ENCODE measurements at regions of chr14 and their contacts with region 1.

Region 1: DNA sequence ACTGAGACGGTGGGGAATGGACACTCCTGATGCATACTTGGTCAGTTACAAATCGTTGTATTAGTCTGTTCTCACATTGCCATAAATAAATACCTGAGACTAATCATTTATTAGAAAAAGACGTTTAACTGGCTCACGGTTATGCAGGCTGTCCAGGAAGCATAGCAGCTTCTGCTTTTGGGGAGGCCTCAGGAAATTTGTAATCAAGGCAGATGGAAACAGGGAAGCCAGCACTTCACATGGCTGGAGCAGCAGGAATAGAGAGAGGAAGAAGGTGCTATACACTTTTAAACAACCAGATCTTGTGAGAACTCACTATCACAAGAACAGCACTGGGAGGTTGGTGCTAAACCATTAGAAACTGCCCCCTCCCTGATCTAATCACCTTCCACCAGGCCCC is 418.2 kb downstream of the FLRT2 start:
- DNase-seq: peak; percentile 52 to 74 (median 61)
- H3K4me3 ChIP-seq: peak overlapping the region in 1 of 3 experiments; percentile 50
- H3K4me3 Mint-ChIP-seq: peak overlapping the region in 1 of 2 donors; percentile 69
- H3K27ac ChIP-seq: peak overlapping the region in 1 of 2 donors; percentile 50
- H3K27ac Mint-ChIP-seq: peak overlapping the region; percentile 47 to 88 (median 70)
- H3K4me1 ChIP-seq: peaks cover 23 to 31% of the 10 kb centered on the region in 2 donors
- H3K4me1 Mint-ChIP-seq: peaks cover 34% of the 10 kb centered on the region
- H3K27me3 ChIP-seq: no peaks in the 10 kb centered on the region
- H3K27me3 Mint-ChIP-seq: no peaks in the 10 kb centered on the region
- CTCF ChIP-seq: no peak

Region 2: DNA sequence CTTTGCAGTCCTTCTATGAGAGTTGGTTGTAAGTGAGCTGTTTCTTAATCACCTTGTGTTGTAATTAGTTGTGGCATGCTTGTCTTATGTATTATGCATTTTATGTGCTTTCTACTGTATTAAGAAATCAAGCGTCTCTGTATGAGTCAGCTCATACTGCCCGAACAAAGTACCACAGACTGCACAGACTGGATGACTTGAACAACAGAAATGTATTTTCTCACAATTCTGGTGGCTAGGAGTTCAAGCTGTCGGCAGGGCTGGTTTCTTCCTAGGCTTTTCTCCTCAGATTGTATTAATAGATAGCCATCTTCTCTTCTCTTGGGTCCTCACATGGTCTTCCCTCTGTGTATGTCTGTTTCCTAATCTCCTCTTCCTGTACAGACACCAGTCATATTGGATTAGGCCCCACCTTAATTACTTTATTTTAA is 340.5 kb before region 1 on chr14:
- intact Hi-C with region 1: loop called in 1 of 2 experiments (anchors 10 kb)
- DNase-seq: peak; percentile 76 to 91 (median 89)
- H3K4me3 ChIP-seq: peak overlapping the region in 1 of 3 experiments; percentile 28
- H3K4me3 Mint-ChIP-seq: peak overlapping the region in 1 of 2 donors; percentile 51
- H3K27ac ChIP-seq: peak overlapping the region; percentile 55 to 90
- H3K27ac Mint-ChIP-seq: peak overlapping the region; percentile 92 to 97 (median 95)
- H3K4me1 ChIP-seq: peaks cover 24 to 38% of the 10 kb centered on the region in 2 donors
- H3K4me1 Mint-ChIP-seq: peaks cover 31% of the 10 kb centered on the region
- H3K27me3 ChIP-seq: no peaks in the 10 kb centered on the region
- H3K27me3 Mint-ChIP-seq: peaks cover 0 to 2% (median 0%) of the 10 kb centered on the region in 3 donors
- CTCF ChIP-seq: no peak

Region 3: GRCh38 chr14:85991156-85991555 is 43.0 kb after region 1 on chr14:
- intact Hi-C with region 1: no loop called
- DNase-seq: peak in 1 of 3 donors; percentile 11
- H3K4me3 ChIP-seq: no peak overlapping the region
- H3K4me3 Mint-ChIP-seq: no peak overlapping the region
- H3K27ac ChIP-seq: no peak overlapping the region
- H3K27ac Mint-ChIP-seq: no peak overlapping the region
- H3K4me1 ChIP-seq: no peaks in the 10 kb centered on the region
- H3K4me1 Mint-ChIP-seq: no peaks in the 10 kb centered on the region
- H3K27me3 ChIP-seq: no peaks in the 10 kb centered on the region
- H3K27me3 Mint-ChIP-seq: no peaks in the 10 kb centered on the region
- CTCF ChIP-seq: no peak

Region 4: GRCh38 chr14:86124328-86124727 is 176.2 kb after region 1 on chr14:
- intact Hi-C with region 1: no loop called
- DNase-seq: no peak
- H3K4me3 ChIP-seq: no peak overlapping the region
- H3K4me3 Mint-ChIP-seq: no peak overlapping the region
- H3K27ac ChIP-seq: no peak overlapping the region
- H3K27ac Mint-ChIP-seq: no peak overlapping the region
- H3K4me1 ChIP-seq: no peaks in the 10 kb centered on the region
- H3K4me1 Mint-ChIP-seq: no peaks in the 10 kb centered on the region
- H3K27me3 ChIP-seq: no peaks in the 10 kb centered on the region
- H3K27me3 Mint-ChIP-seq: peaks cover 0 to under 1% (median 0%) of the 10 kb centered on the region in 3 donors
- CTCF ChIP-seq: no peak